Activated CD4-positive, alpha-beta T cell treated with anti-CD3 and anti-CD28 coated beads, Interleukin-2, amount 10 ng/mL, durations not matched to agents 24 days and 14 days (primary cell): ENCODE measurements at regions of chr7 and their contacts with region 1.

Region 1: DNA sequence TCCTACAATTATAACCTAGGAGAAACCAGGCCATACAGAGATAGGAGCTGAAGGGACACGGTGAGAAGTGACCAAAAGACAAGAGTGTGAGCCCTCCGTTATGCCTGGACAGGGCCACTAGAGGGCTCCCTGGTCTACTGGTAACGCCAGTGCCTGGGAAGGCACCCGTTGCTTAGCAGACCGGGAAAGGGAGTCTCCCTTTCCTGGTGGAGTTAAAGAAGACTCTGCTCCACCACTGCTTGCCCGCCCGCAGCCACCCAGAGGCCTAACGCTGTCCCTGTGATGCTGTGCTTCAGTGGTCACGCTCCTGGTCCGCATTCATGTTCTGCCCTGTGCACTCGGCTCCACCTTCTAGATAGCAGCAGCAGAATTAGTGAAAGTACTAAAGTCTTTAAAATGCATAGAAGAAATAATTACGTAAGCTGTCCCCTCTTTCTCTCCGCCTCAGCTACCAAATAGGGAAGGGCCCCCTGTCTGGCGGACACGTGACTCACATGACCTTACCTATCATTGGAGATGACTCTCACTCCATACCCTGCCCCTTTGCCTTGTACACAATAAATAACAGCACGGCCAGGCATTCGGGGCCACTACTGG is 34.8 kb downstream of the GRID2IP start:
- DNase-seq: peak; percentile 91
- H3K4me3 Mint-ChIP-seq: peak overlapping the region; percentile 82
- H3K27ac Mint-ChIP-seq: no peak overlapping the region
- H3K4me1 Mint-ChIP-seq: peaks cover 6% of the 10 kb centered on the region
- H3K27me3 Mint-ChIP-seq: peaks cover 2% of the 10 kb centered on the region

Region 2: DNA sequence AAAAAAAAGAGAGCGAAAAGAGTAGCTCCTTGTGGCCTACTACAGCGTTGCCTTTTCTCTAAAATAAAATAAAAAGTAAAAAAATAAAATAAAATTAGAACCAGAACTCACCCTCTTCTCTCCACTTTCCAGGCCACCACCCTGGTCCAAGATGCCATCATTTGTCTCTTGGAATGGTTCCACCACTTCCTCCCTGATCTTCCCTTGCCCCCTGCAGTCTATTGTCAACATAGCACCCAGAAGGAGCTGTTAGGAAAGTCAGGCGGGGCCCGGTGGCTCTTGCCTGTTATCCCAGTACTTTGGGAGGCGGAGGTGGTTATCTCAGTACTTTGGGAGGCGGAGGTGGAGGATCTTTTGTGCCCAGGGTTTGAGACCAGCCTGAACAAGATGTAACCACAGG is 42.4 kb after region 1 on chr7:
- intact Hi-C with region 1: loop called (anchors 2 kb)
- DNase-seq: peak; percentile 73
- H3K4me3 Mint-ChIP-seq: no peak overlapping the region
- H3K27ac Mint-ChIP-seq: no peak overlapping the region
- H3K4me1 Mint-ChIP-seq: peaks cover 6% of the 10 kb centered on the region
- H3K27me3 Mint-ChIP-seq: peaks cover 5% of the 10 kb centered on the region

Region 3: GRCh38 chr7:6571160-6571779 is 54.8 kb after region 1 on chr7:
- intact Hi-C with region 1: loop called (anchors 5 kb)
- DNase-seq: no peak
- H3K4me3 Mint-ChIP-seq: no peak overlapping the region
- H3K27ac Mint-ChIP-seq: no peak overlapping the region
- H3K4me1 Mint-ChIP-seq: no peaks in the 10 kb centered on the region
- H3K27me3 Mint-ChIP-seq: peaks cover 3% of the 10 kb centered on the region

Region 4: GRCh38 chr7:6934986-6935385 is 418.5 kb after region 1 on chr7:
- intact Hi-C with region 1: loop called (anchors 10 kb)
- DNase-seq: no peak
- H3K4me3 Mint-ChIP-seq: no peak overlapping the region
- H3K27ac Mint-ChIP-seq: no peak overlapping the region
- H3K4me1 Mint-ChIP-seq: peaks cover 3% of the 10 kb centered on the region
- H3K27me3 Mint-ChIP-seq: no peaks in the 10 kb centered on the region